ENCODE measurements at regions of chr18 and their contacts with region 1.

Region 1: DNA sequence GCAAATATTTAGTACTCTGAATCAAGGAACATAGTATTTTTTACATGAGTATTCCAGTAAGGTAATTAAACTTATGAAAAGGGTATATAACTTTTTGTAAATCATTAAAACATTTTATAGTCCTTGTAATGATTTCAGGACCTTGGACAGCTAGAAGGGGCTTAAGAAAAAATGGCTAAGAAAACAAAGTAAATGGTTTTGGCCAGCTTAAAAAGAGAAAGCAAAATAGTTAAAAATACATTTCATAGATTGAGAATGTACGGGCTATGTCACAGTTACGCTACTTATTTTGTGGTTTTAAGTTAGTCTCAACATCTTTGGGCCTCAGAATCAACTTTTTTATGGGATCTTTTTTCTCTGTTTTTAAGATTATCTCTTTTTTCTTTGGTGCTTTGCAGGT is 26.7 kb downstream of the POLI start:
- DNase-seq: no peak
- ATAC-seq: no peak
- H3K4me3 ChIP-seq: no peak overlapping the region
- H3K4me3 Mint-ChIP-seq: no peak overlapping the region
- H3K27ac ChIP-seq: no peak overlapping the region
- H3K27ac Mint-ChIP-seq: no peak overlapping the region
- H3K4me1 ChIP-seq: no peaks in the 10 kb centered on the region
- H3K4me1 Mint-ChIP-seq: no peaks in the 10 kb centered on the region
- H3K27me3 ChIP-seq: no peaks in the 10 kb centered on the region
- H3K27me3 Mint-ChIP-seq: no peaks in the 10 kb centered on the region

Region 2: DNA sequence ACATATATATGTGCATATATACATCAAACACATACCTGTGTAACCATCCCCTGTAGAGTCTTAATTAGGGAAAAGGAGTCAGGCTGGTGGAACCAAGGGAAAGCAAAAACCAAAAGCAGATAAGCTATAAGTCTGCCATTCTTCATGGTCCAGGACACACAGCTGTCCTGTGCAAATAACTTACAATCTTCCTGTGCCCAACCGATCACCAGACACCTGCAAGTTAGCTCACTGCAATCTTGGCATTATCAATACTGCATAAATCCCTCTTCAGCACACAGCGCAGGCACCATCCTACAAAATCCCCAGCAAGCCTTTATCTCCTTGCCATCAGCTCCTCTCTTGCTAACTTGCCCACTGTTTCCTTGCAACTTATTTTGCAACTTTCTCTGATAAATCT is 234.2 kb after region 1 on chr18:
- CTCF ChIA-PET with region 1: no interaction called
- POLR2A ChIA-PET with region 1: interaction called in 1 of 2 experiments, 13 read pairs
- DNase-seq: no peak
- ATAC-seq: no peak
- H3K4me3 ChIP-seq: no peak overlapping the region
- H3K4me3 Mint-ChIP-seq: no peak overlapping the region
- H3K27ac ChIP-seq: no peak overlapping the region
- H3K27ac Mint-ChIP-seq: no peak overlapping the region
- H3K4me1 ChIP-seq: no peaks in the 10 kb centered on the region
- H3K4me1 Mint-ChIP-seq: no peaks in the 10 kb centered on the region
- H3K27me3 ChIP-seq: peaks cover 0 to 3% of the 10 kb centered on the region in 2 experiments
- H3K27me3 Mint-ChIP-seq: peaks cover 9 to 21% of the 10 kb centered on the region in 2 donors

Measured in T-cell (primary cell).